SK-N-SH (cell line): ENCODE measurements at regions of chr3 and their contacts with region 1.

Region 1: GRCh38 chr3:51799879-51800749 is 21.1 kb upstream of the IQCF6 start:
- DNase-seq: peak; percentile 61
- H3K4me3 ChIP-seq: no peak overlapping the region; a peak in 1 of 4 replicates
- H3K27ac ChIP-seq: no peak overlapping the region
- H3K4me1 ChIP-seq: peaks cover 0 to 17% of the 10 kb centered on the region in 2 experiments; a peak in 2 of 4 replicates
- H3K27me3 ChIP-seq: no peaks in the 10 kb centered on the region; the same call in 1 of the 2 replicates
- CTCF ChIP-seq: peak; percentile 88
- EP300 ChIP-seq: no peak
- RAD21 ChIP-seq: peak; percentile 82

Region 2: GRCh38 chr3:51813539-51813938 is 13.4 kb after region 1 on chr3:
- CTCF ChIA-PET with region 1: interaction called, 15 read pairs
- POLR2A ChIA-PET with region 1: no interaction called
- DNase-seq: peak; percentile 84
- H3K4me3 ChIP-seq: no peak overlapping the region
- H3K27ac ChIP-seq: peak overlapping the region in 1 of 2 experiments; percentile 91; a peak in 2 of 4 replicates
- H3K4me1 ChIP-seq: peaks cover 0 to 20% of the 10 kb centered on the region in 2 experiments; a peak in 1 of 4 replicates
- H3K27me3 ChIP-seq: no peaks in the 10 kb centered on the region; the same call in 1 of the 2 replicates
- CTCF ChIP-seq: no peak
- EP300 ChIP-seq: peak in 1 of 2 experiments; percentile 75; a peak in 2 of 4 replicates
- RAD21 ChIP-seq: peak; percentile 6